ENCODE measurements at regions of chr1 and their contacts with region 1.

Region 1: GRCh38 chr1:26538480-26539412 is 9.2 kb downstream of the RPS6KA1 start:
- DNase-seq: peak; percentile 33
- H3K4me3 ChIP-seq: no peak overlapping the region
- H3K27ac ChIP-seq: no peak overlapping the region
- H3K4me1 ChIP-seq: peaks cover 2% of the 10 kb centered on the region
- H3K27me3 ChIP-seq: no peaks in the 10 kb centered on the region
- CTCF ChIP-seq: peak; percentile 62 to 73
- POLR2A ChIP-seq: no peak

Region 2: GRCh38 chr1:26477446-26478152 is 61.1 kb before region 1 on chr1:
- CTCF ChIA-PET with region 1: no interaction called
- POLR2A ChIA-PET with region 1: no interaction called
- dilution Hi-C with region 1: no loop called
- intact Hi-C with region 1: no loop called
- DNase-seq: no peak
- H3K4me3 ChIP-seq: no peak overlapping the region
- H3K27ac ChIP-seq: no peak overlapping the region
- H3K4me1 ChIP-seq: peaks cover 14% of the 10 kb centered on the region
- H3K27me3 ChIP-seq: no peaks in the 10 kb centered on the region
- CTCF ChIP-seq: no peak
- POLR2A ChIP-seq: no peak

Region 3: DNA sequence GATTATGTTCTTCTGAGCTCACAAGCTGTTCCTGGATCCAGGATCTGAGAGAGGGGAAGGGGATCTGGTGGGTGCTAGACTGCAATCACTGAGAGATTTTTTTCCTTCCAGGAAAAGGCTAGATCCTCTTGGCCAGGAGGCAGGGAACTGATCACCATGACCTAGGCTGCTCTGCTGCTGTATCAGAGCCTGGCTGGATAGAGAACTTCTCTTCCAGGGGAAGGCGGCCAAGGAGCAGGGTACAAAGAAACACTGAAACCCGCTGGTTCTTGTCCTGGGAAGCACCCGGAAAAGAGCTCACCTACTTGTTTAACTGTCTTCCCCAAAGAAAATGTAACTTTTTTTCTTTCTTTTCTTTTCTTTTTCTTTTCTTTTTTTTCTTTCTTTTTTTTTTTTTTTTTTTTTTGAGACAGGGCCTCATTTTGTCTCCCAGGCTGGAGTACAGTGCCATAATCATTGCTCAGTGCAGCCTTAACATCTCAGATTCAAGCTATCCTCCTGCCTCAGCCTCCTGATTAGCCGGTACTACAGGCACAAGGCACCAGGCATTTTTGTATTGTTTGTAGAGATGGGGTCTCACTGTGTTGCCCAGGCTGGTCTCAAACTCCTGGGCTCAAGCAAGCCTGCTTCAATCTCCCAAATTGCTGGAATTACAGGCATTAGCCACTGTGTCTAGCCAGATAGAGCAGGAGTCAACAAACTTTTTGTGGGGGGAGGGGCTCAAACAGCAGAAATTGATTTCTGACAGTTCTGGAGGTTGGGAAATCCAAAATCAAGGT is 21.6 kb before region 1 on chr1:
- CTCF ChIA-PET with region 1: interaction called, 19 read pairs
- POLR2A ChIA-PET with region 1: no interaction called
- dilution Hi-C with region 1: no loop called
- intact Hi-C with region 1: no loop called
- DNase-seq: no peak
- H3K4me3 ChIP-seq: no peak overlapping the region
- H3K27ac ChIP-seq: no peak overlapping the region
- H3K4me1 ChIP-seq: no peaks in the 10 kb centered on the region
- H3K27me3 ChIP-seq: peaks cover 4 to 5% of the 10 kb centered on the region in 2 experiments
- CTCF ChIP-seq: no peak
- POLR2A ChIP-seq: no peak

Region 4: GRCh38 chr1:26571381-26571780 is 32.6 kb after region 1 on chr1:
- CTCF ChIA-PET with region 1: no interaction called
- POLR2A ChIA-PET with region 1: no interaction called
- dilution Hi-C with region 1: no loop called
- intact Hi-C with region 1: no loop called
- DNase-seq: no peak
- H3K4me3 ChIP-seq: no peak overlapping the region
- H3K27ac ChIP-seq: no peak overlapping the region
- H3K4me1 ChIP-seq: no peaks in the 10 kb centered on the region
- H3K27me3 ChIP-seq: no peaks in the 10 kb centered on the region
- CTCF ChIP-seq: no peak
- POLR2A ChIP-seq: no peak

Measured in endothelial cell of umbilical vein (primary cell).